A673 (cell line): ENCODE measurements at regions of chr20 and their contacts with region 1.

Region 1: GRCh38 chr20:48828022-48828743 is 384 bp upstream of the PREX1 start:
- DNase-seq: peak; percentile 96
- H3K4me3 ChIP-seq: peak overlapping the region; percentile 64
- H3K27ac ChIP-seq: peak overlapping the region; percentile 98
- H3K4me1 ChIP-seq: peaks cover 57% of the 10 kb centered on the region
- H3K27me3 ChIP-seq: no peaks in the 10 kb centered on the region
- CTCF ChIP-seq: no peak

Region 2: DNA sequence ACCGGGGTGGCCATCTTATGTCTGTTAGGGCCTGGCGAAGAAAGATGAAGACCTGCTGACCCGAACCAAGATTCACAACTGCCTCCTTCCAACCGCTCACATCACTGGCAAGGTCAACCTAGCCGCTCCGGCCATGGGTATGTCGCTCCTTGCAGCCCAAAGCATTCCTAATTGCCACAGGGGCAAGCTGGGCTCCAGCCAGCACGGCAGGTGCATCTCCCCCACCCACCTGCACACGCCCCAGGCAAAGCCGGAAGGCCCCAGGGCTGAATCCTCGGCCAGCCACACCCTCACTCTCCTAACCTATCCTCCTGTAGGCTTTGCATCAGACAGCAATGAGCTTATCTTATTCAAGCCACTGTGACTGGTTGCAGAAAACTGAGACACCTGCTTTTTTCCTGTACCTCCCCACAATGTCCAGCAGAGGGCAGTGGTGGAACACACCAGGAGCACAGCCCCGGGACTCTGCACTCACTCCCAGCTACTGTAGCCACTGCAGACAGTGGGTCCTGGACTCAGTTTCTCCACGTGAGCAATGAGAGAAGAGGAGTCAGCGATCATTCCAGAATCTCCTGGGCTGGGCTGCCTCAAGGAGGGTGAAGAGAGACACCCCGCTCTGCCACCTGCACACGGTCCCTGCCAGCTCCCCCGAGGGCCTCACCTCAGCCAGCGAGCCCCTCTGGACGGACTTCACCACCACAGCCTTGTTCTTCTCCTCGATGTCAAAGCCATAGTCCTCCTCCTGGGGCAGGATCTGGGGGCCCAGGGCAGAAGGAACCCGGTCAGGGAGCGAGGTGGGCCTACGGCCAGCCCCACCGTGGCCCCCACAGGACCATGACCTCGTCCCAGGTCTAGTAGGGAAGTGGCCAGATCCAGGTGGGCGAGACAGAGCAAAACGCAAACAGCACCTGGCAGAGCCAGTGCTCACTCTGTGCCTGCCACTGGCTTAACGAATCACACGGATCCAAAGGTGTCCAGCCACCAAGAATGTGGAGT is 170.4 kb before region 1 on chr20:
- CTCF ChIA-PET with region 1: interaction called, 4 read pairs
- POLR2A ChIA-PET with region 1: no interaction called
- intact Hi-C with region 1: loop called (anchors 10 kb)
- DNase-seq: peak; percentile 86
- H3K4me3 ChIP-seq: no peak overlapping the region
- H3K27ac ChIP-seq: peak overlapping the region; percentile 71
- H3K4me1 ChIP-seq: peaks cover 20% of the 10 kb centered on the region
- H3K27me3 ChIP-seq: no peaks in the 10 kb centered on the region
- CTCF ChIP-seq: peak; percentile 88

Region 3: GRCh38 chr20:48682529-48683251 is 145.5 kb before region 1 on chr20:
- CTCF ChIA-PET with region 1: no interaction called
- POLR2A ChIA-PET with region 1: no interaction called
- intact Hi-C with region 1: loop called (anchors 5 kb)
- DNase-seq: peak; percentile 99
- H3K4me3 ChIP-seq: peak overlapping the region; percentile 8
- H3K27ac ChIP-seq: peak overlapping the region; percentile 92
- H3K4me1 ChIP-seq: peaks cover 69% of the 10 kb centered on the region
- H3K27me3 ChIP-seq: no peaks in the 10 kb centered on the region
- CTCF ChIP-seq: no peak

Region 4: GRCh38 chr20:48697879-48698724 is 130.1 kb before region 1 on chr20:
- CTCF ChIA-PET with region 1: interaction called, 13 read pairs
- POLR2A ChIA-PET with region 1: no interaction called
- intact Hi-C with region 1: no loop called
- DNase-seq: peak; percentile 82
- H3K4me3 ChIP-seq: no peak overlapping the region
- H3K27ac ChIP-seq: peak overlapping the region; percentile 73
- H3K4me1 ChIP-seq: peaks cover 30% of the 10 kb centered on the region
- H3K27me3 ChIP-seq: no peaks in the 10 kb centered on the region
- CTCF ChIP-seq: no peak

Region 5: GRCh38 chr20:48892844-48893243 is 64.7 kb after region 1 on chr20:
- CTCF ChIA-PET with region 1: interaction called, 4 read pairs
- POLR2A ChIA-PET with region 1: no interaction called
- intact Hi-C with region 1: loop called (anchors 2 kb)
- DNase-seq: peak; percentile 86
- H3K4me3 ChIP-seq: no peak overlapping the region
- H3K27ac ChIP-seq: peak overlapping the region; percentile 97
- H3K4me1 ChIP-seq: peaks cover 55% of the 10 kb centered on the region
- H3K27me3 ChIP-seq: no peaks in the 10 kb centered on the region
- CTCF ChIP-seq: no peak